Stomach (tissue), 19 donors: ENCODE measurements at regions of chr2 and their contacts with region 1.

Region 1: DNA sequence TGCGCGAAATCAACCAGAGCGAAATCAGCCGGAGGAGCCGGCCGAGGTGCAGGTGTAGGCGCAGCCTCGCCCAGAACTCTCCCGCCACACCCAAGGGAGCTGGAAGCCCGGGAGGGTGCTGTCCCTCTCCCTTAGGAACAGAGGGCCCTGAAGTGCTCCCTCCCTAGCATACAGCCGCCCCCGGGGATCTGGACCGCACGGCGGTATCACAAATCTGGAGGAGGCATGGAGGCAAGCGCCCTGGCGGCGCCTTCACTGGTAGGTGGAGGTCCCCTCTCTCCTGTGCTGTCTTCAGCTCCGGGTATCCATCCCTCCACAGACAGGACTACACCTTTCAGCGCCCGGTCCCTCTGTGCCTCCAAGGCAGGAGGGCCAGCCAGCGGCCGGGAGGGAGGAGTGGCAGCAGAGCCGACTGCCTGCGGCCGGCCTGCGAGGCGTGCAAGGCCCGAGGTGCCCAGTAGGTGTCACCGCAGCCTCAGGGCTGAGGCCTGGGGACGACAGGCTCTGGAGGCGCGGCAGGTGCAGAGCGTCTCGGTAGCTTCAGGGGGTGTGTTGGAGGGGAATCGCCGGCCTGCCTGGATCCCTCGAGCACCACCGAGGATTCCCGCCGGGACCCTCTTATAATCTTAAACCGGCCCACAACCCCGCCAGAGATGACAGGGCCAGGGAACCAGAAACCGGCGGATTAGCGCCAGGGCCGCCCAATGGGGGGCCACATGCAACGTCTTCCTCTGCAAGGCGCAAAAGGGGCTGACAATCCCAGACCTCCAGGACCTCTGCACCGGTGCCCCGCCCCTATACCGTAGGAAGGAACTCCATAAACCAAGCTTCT is 2.8 kb downstream of the IHH start:
- DNase-seq: peak; percentile 87 to 93
- H3K4me3 ChIP-seq: peak overlapping the region; percentile 46 to 61 (median 56)
- H3K27ac ChIP-seq: peak overlapping the region in 2 of 5 donors; percentile 24 to 85
- H3K4me1 ChIP-seq: peaks cover 41 to 55% (median 53%) of the 10 kb centered on the region in 4 donors
- H3K27me3 ChIP-seq: peaks cover 15 to 91% (median 55%) of the 10 kb centered on the region in 3 donors
- CTCF ChIP-seq: peak in 5 of 7 experiments; percentile 90 to 96 (median 92)
- EP300 ChIP-seq: no peak
- POLR2A ChIP-seq: no peak

Region 2: DNA sequence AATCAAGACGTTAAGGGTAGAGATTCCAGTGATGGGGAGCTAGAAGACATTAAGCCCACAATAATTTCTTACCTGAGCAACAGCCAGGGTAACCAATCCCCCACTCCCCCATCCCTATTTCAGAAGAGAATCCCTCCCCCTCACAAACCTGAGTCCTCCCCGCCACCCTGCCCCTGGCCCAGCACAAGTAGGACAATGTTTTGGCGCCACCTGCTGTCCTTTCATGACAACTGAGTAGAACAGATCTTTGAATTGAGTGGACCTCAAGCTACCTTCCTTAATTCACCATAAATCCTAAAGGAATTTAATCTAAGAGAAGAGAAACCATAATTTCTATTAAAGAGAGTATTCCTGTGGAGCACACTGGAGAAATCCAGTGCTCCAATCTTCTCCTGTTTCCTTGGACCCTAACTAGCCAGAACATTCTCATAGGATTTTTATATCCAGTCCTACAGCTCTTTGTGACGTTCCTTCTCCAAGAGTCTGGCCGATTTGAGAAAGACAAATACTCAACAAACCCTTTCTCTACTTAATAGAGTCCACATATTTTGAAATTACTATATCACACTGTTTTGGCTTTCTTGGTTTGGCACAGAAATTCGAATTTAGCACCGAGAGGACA is 61.6 kb after region 1 on chr2:
- intact Hi-C with region 1: loop called (anchors 10 kb)
- DNase-seq: peak; percentile 79 to 88
- H3K4me3 ChIP-seq: no peak overlapping the region
- H3K27ac ChIP-seq: no peak overlapping the region
- H3K4me1 ChIP-seq: peaks cover 28 to 61% (median 53%) of the 10 kb centered on the region in 4 donors
- H3K27me3 ChIP-seq: no peaks in the 10 kb centered on the region
- CTCF ChIP-seq: peak in 5 of 7 experiments; percentile 42 to 87 (median 74)
- EP300 ChIP-seq: no peak
- POLR2A ChIP-seq: no peak

Region 3: DNA sequence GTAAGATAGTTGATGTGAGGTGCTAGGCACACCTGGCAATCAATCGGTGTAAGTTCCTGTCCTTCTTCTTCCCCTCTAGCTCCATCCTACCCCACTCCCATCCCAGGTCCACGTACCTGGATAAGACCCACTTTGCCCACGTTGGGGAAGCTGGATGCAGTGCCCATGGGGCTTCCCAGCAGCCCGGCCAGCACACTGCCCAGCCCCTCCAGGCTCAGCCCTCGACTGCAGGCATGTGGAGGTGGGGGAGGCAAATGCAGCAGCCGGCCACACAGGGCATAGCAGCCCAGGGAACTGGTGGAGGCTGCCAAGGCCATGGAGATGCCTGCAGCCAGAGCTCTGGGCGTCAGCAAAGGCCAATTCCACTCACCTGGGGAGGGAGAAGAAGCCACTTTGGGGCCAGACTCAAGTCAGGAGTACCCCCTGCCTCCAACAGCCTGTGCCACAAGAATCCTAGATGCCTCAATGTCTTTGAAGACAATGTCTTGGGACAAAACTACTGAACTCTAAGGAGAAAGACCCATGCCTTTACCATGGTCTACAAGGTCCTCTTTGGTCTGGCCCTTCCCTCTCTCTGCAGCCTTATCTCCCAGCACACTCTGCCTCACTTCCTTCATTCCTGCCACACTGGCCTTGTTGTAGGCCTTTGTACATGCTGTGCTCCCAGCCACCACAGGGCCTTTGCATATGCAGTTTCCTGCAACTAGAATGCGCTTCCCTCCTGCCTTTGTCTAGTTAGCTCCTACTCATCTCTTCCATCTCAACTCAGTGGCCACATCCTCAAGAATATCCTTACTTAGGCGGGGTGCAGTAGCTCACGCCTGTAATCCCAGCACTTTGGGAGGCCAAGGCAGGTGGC is 107.4 kb after region 1 on chr2:
- intact Hi-C with region 1: no loop called
- DNase-seq: no peak
- H3K4me3 ChIP-seq: no peak overlapping the region
- H3K27ac ChIP-seq: no peak overlapping the region
- H3K4me1 ChIP-seq: peaks cover 0 to 9% (median 8%) of the 10 kb centered on the region in 4 donors
- H3K27me3 ChIP-seq: no peaks in the 10 kb centered on the region
- CTCF ChIP-seq: no peak
- EP300 ChIP-seq: no peak
- POLR2A ChIP-seq: no peak

Region 4: GRCh38 chr2:219199470-219200211 is 141.7 kb after region 1 on chr2:
- intact Hi-C with region 1: no loop called
- DNase-seq: no peak
- H3K4me3 ChIP-seq: no peak overlapping the region
- H3K27ac ChIP-seq: no peak overlapping the region
- H3K4me1 ChIP-seq: peaks cover 0 to 9% (median 3%) of the 10 kb centered on the region in 4 donors
- H3K27me3 ChIP-seq: peaks cover 0 to 8% (median 0%) of the 10 kb centered on the region in 3 donors
- CTCF ChIP-seq: no peak
- EP300 ChIP-seq: no peak
- POLR2A ChIP-seq: no peak